Psoas muscle (tissue), 8 donors: ENCODE measurements at regions of chr2 and their contacts with region 1.

Region 1: DNA sequence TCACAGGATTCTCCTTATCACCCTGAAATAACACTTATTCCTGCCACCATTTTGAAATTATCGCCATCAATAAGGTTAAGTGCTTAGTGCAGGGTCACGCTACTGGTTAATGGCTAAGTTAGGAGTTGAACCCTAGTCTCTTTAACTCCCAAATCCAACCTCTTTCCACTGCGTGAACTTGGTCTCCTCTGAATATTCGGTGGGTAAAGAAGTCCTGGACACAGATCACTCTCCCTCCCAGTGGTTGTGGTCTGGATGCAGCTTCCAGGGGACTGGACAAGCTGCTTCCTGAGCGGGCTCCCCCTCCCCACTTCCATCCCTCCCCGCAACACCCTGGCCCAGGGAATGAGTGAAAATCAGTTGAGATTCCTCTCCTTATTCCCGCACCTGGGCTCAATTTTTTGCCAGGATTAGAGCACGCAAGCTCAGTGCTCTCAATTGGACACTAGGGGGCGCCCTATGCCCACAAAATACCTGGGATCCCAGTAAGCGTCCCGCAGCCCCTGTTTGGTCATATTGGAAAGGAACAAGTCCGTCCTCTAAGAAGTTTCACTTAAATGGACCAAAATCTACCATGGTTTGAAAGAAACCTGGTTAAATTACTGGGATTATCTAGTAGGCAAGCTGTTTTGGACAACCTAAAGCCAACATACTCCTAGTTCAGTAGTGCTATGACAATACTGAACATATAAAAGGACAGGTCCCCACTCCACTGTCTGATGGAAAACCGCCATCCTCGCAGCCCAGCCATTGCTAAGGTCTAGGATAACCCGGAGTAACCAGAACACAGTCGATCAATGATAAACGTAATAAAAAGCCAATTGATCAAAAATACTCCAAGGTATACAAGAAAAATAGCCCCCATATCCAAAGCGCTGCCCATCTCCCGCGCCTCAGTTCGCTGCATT is 40.4 kb downstream of the DHRS9 start:
- DNase-seq: peak; percentile 40 to 71
- ATAC-seq: peak in 3 of 4 donors; percentile 64 to 83 (median 65)
- H3K4me3 ChIP-seq: no peak overlapping the region
- H3K27ac ChIP-seq: no peak overlapping the region
- H3K4me1 ChIP-seq: no peaks in the 10 kb centered on the region
- H3K27me3 ChIP-seq: no peaks in the 10 kb centered on the region
- CTCF ChIP-seq: peak; percentile 66

Region 2: GRCh38 chr2:169069341-169069740 is 40.4 kb before region 1 on chr2 and contains the start of gene DHRS9:
- intact Hi-C with region 1: no loop called
- DNase-seq: no peak
- ATAC-seq: no peak
- H3K4me3 ChIP-seq: no peak within 1 kb of the TSS
- H3K27ac ChIP-seq: no peak within 1 kb of the TSS
- H3K4me1 ChIP-seq: no peaks in the 10 kb centered on the region
- H3K27me3 ChIP-seq: no peaks in the 10 kb centered on the region
- CTCF ChIP-seq: no peak
- total RNA-seq, gene DHRS9: 0.27 to 0.79 (median 0.49) TPM in 3 of 4 donors, not detected in the other

Region 3: GRCh38 chr2:169131587-169132512 is 22.1 kb after region 1 on chr2:
- intact Hi-C with region 1: loop called in 1 of 2 experiments (anchors 2 kb)
- DNase-seq: no peak
- ATAC-seq: peak in 2 of 4 donors; percentile 48
- H3K4me3 ChIP-seq: no peak overlapping the region
- H3K27ac ChIP-seq: no peak overlapping the region
- H3K4me1 ChIP-seq: no peaks in the 10 kb centered on the region
- H3K27me3 ChIP-seq: no peaks in the 10 kb centered on the region
- CTCF ChIP-seq: peak; percentile 84